Endothelial cell of umbilical vein (primary cell): ENCODE measurements at regions of chr17 and their contacts with region 1.

Region 1: DNA sequence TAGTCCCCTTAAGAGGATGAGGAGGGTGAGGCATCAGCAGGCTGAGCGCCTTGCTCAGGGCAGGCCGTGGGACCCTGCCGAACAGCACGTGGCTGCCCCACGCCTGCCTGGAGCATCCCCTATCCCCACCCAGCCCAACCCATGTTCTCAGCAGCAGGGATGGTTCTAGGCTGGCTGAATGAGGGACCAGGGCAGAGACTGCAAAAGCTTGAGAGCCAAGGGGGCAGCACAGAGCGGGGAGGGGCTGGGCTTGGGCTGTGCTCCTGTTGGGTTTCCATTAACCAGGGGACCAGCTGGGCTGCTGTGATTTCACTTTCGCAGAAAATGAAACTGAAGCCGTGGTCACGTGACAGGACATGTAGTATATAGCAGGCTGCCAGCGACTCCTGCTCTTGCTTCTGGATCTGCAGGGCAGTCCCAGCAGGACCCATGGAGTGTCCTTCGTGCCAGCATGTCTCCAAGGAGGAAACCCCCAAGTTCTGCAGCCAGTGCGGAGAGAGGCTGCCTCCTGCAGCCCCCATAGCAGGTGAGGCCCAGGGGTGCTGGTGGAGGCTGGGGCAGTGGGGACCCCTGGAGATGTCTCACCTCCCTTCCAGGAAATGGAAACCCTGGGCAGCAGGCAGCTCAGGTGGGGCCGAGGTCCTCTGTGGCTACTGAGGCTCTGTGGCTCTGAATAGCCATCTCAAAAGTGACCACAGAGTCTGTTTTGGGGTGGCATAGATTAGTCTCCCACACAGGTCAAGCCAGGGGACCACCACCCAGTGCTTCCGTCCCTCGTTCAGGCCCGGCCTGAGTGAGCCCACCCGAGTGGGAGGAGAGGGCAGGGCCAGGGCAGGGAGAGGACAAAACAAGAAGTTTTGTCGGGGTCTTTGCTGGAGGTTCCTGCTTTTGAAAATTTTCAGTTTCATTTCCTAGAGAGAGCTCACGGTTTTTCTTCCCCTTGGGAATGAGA is 2.9 kb downstream of the RNF213 start:
- DNase-seq: peak; percentile 86
- H3K4me3 ChIP-seq: peak overlapping the region in 2 of 3 experiments; percentile 1 to 12
- H3K27ac ChIP-seq: no peak overlapping the region
- H3K4me1 ChIP-seq: peaks cover 30% of the 10 kb centered on the region
- H3K27me3 ChIP-seq: no peaks in the 10 kb centered on the region
- CTCF ChIP-seq: peak in 1 of 2 donors; percentile 18
- POLR2A ChIP-seq: peak; percentile 77

Region 2: DNA sequence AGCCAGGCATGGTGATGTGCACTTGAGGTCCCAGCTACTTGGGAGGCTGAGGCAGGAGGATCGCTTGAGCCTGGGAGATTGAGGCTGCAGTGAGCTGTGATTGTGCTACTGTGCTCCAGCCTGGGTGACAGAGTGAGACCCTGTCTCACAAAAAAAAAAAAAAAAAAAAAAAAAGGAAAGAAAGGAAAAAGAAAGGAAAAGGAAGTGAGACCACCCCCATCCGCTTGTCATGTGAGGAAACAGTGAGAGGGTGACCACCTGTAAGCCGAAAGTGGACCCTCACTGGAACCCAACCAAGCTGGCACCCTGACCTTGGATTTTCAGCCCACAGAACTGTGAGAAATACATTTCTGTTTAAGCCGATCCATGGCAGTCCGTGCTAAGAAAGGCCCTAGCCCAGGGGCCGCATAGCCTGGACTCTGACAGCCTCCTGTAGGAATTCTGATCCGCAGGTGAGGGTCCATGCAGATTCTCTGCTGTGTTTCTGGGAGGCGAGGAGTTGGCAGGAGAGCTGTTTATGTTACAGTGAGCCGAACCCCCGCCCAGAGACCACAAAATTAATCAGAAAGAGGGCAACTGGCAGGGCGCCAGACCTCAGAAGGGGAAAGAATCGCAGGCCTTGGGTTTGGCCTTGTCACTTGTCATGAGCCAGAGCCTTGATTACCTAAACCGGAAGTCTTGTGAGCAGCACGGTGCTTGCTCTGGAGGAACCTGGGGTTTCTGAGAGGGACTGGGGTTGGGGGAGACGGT is 44.3 kb before region 1 on chr17:
- CTCF ChIA-PET with region 1: no interaction called
- POLR2A ChIA-PET with region 1: no interaction called
- dilution Hi-C with region 1: no loop called
- intact Hi-C with region 1: loop called (anchors 1 kb)
- DNase-seq: peak; percentile 55
- H3K4me3 ChIP-seq: peak overlapping the region; percentile 17 to 83 (median 65)
- H3K27ac ChIP-seq: peak overlapping the region; percentile 37
- H3K4me1 ChIP-seq: peaks cover 13% of the 10 kb centered on the region
- H3K27me3 ChIP-seq: no peaks in the 10 kb centered on the region
- CTCF ChIP-seq: no peak
- POLR2A ChIP-seq: no peak

Region 3: GRCh38 chr17:80279895-80280294 is 16.4 kb after region 1 on chr17:
- CTCF ChIA-PET with region 1: interaction called, 6 read pairs
- POLR2A ChIA-PET with region 1: no interaction called
- dilution Hi-C with region 1: no loop called
- intact Hi-C with region 1: loop called (anchors 2 kb)
- DNase-seq: peak; percentile 56
- H3K4me3 ChIP-seq: no peak overlapping the region
- H3K27ac ChIP-seq: no peak overlapping the region
- H3K4me1 ChIP-seq: peaks cover 20% of the 10 kb centered on the region
- H3K27me3 ChIP-seq: no peaks in the 10 kb centered on the region
- CTCF ChIP-seq: peak in 1 of 2 donors; percentile 11
- POLR2A ChIP-seq: no peak

Region 4: GRCh38 chr17:80292521-80292971 is 29.0 kb after region 1 on chr17:
- CTCF ChIA-PET with region 1: no interaction called
- POLR2A ChIA-PET with region 1: no interaction called
- dilution Hi-C with region 1: no loop called
- intact Hi-C with region 1: no loop called
- DNase-seq: no peak
- H3K4me3 ChIP-seq: no peak overlapping the region
- H3K27ac ChIP-seq: no peak overlapping the region
- H3K4me1 ChIP-seq: no peaks in the 10 kb centered on the region
- H3K27me3 ChIP-seq: no peaks in the 10 kb centered on the region
- CTCF ChIP-seq: no peak
- POLR2A ChIP-seq: no peak

Region 5: DNA sequence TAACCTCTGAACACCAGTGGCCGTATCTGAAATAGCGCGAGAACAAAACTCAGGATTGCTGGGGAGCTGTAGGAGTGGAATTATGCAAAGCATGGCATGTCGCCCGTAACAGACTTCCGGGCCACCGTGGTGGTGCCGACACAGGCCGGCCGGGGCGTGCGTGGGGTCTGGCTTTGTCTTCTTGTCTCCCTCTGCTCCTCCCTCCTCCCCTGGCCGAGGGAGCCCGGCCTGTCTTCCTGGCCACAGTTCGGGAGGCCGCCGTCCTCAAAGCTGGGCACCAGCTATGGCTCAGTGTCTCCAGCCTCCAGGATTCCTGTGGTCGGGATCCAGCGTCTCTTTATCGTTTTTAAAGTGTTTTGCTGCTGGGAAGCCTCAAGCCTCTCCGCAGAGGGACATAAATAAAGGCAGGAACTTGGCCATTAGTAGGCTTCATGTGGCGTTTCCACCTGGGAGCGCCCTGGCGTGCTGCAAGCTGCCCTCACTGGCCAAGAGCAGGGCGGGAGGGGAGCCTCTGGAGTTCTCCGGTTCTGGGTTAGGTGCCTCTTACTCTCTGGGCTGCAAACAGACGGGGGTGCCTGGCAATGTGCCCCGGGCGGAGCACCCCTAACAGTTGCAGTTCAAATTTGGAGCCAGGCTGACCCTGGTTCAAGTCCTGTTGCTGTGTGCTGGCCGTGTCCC is 234.9 kb after region 1 on chr17:
- CTCF ChIA-PET with region 1: no interaction called
- POLR2A ChIA-PET with region 1: no interaction called
- dilution Hi-C with region 1: no loop called
- intact Hi-C with region 1: no loop called
- DNase-seq: no peak
- H3K4me3 ChIP-seq: no peak overlapping the region
- H3K27ac ChIP-seq: no peak overlapping the region
- H3K4me1 ChIP-seq: no peaks in the 10 kb centered on the region
- H3K27me3 ChIP-seq: peaks cover 0 to 2% of the 10 kb centered on the region in 2 experiments
- CTCF ChIP-seq: no peak
- POLR2A ChIP-seq: no peak